Left colon (tissue), 2 donors: ENCODE measurements at regions of chr17 and their contacts with region 1.

Region 1: GRCh38 chr17:69936965-69937607 is 137.9 kb upstream of the KCNJ16 start:
- DNase-seq: no peak
- ATAC-seq: no peak

Region 2: DNA sequence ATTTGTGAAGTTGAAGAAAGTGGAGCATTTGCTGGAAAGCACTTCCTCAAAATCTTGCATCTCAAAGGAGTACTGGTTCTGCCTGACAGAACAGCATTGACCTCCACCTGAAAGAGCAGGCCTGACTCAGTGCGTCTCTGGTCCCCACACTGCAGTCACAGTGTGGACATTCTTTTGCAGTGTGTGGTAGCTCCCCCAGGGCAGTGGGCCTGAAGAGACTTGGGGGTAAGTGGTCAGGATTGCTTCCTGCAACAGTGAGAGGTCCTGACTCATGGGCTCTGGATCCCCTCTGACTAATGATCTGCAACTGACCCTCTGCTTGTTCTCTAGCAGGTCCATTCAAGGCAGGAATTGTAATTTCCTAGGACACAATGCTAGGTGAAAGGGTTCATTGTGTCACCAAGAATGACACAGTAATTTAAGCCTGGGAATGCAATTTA is 67.0 kb before region 1 on chr17:
- intact Hi-C with region 1: loop called in 1 of 2 experiments (anchors 10 kb)
- DNase-seq: no peak
- ATAC-seq: no peak